Left colon (tissue), 2 donors: ENCODE measurements at regions of chr14 and their contacts with region 1.

Region 1: GRCh38 chr14:45947830-45948229 is 694.8 kb upstream of the MIS18BP1 start:
- DNase-seq: no peak
- ATAC-seq: no peak

Region 2: DNA sequence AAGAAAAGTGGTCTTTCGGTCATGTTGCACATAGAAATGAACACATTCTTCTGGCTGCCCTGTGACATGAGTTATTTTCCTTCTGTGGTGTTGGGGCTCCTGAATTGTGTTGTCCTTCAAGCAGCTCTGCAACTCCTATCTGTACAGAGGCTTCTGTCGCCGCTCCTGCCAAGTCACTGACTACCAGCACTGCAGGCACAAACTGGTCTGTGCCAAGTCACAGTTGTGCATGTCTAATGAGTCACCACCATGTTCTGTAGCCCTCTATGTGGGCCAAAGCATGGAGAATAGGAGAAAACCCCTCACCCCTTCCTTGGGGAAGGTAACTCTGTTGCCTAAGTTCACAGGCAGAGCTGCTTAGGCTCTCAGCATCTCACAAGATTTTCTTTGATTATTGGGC is 420.4 kb after region 1 on chr14:
- intact Hi-C with region 1: loop called in 1 of 2 experiments (anchors 5 kb)
- DNase-seq: no peak
- ATAC-seq: no peak